ENCODE measurements at regions of chr12 and their contacts with region 1.

Region 1: GRCh38 chr12:76763743-76764675 is at the start of gene ZDHHC17:
- DNase-seq: peak; percentile 96
- H3K4me3 ChIP-seq: peak within 1 kb of the TSS; percentile 80
- H3K27ac ChIP-seq: peak within 1 kb of the TSS; percentile 94
- H3K4me1 ChIP-seq: peaks cover 8% of the 10 kb centered on the region
- H3K27me3 ChIP-seq: no peaks in the 10 kb centered on the region
- CTCF ChIP-seq: no peak
- total RNA-seq, gene ZDHHC17: 41.1 and 41.5 TPM in 2 replicates

Region 2: DNA sequence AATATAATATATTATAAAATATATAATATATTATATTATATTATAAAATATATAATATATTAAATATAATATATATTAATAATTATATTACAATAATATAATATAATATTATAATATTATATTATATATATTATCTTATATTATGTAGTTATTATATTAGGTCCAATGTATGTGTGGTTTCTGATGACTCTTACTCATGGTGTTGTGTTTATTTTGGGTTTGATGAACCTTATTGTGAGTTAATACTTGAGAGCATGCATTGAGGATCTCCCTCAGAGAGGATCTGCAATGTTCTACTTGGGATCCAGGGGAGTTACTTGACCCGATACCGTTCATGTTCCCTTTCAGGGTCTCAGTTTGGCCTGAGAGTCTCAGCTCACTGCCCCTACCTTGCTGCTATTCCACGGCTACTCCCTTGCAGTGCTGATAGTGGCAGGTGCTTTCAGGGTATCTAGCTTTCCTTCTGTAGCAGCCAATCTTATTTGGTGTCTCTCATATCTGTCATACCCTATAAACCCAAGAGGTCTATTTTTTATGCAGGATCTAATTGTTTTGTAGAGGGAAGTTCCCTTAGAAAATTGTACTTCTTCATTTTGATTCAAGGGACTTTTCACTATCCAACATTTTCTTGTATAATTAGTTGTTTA is 89.2 kb before region 1 on chr12:
- CTCF ChIA-PET with region 1: no interaction called
- POLR2A ChIA-PET with region 1: no interaction called
- intact Hi-C with region 1: no loop called
- DNase-seq: no peak
- H3K4me3 ChIP-seq: no peak overlapping the region
- H3K27ac ChIP-seq: no peak overlapping the region
- H3K4me1 ChIP-seq: no peaks in the 10 kb centered on the region
- H3K27me3 ChIP-seq: no peaks in the 10 kb centered on the region
- CTCF ChIP-seq: no peak

Region 3: DNA sequence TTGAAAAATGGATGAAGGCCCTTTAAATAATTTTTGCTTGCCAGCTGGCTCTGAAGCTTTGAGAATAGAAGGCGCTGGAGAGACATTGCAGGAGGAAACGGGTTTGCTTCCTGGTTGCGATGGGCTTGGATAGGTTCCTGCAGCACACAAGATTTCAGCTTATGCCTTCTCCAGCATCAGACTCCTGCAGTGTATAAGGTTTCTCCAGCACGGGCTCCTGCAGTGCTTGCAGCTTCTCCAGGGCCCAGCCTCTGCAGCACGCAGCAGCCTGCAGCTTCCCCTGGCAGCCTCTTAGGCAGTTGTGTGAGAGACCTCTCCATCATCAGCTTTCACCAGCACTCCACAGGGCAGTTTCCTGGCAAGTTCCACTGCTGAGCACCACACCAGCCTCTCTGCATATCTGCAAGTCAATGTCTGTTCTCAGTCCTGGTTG is 78.7 kb before region 1 on chr12:
- CTCF ChIA-PET with region 1: no interaction called
- POLR2A ChIA-PET with region 1: no interaction called
- intact Hi-C with region 1: loop called (anchors 5 kb)
- DNase-seq: peak; percentile 80
- H3K4me3 ChIP-seq: no peak overlapping the region
- H3K27ac ChIP-seq: peak overlapping the region; percentile 48
- H3K4me1 ChIP-seq: peaks cover 43% of the 10 kb centered on the region
- H3K27me3 ChIP-seq: no peaks in the 10 kb centered on the region
- CTCF ChIP-seq: no peak

Region 4: DNA sequence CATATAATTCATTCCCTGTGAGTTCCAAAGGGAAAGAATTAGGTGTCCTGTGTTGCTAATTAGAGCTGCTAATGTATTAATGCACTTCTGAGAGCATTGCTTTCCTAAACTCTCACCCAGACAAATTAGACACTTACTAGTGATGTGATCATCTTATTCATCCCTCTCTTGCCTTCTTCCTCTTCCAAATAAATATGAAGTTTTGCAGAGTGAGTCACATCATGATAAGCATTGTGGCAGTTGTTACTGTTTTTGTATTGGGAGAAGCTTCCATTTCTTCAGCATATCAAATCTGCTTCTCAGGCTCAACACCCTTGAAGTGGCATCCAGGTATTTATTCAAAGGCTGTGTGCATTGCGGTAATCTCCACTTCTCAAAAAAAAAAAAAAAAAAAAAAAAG is 338.7 kb after region 1 on chr12:
- CTCF ChIA-PET with region 1: no interaction called
- POLR2A ChIA-PET with region 1: interaction called, 19 read pairs
- intact Hi-C with region 1: no loop called
- DNase-seq: peak; percentile 57
- H3K4me3 ChIP-seq: no peak overlapping the region
- H3K27ac ChIP-seq: no peak overlapping the region
- H3K4me1 ChIP-seq: no peaks in the 10 kb centered on the region
- H3K27me3 ChIP-seq: no peaks in the 10 kb centered on the region
- CTCF ChIP-seq: no peak